ENCODE measurements at regions of chr9 and their contacts with region 1.

Region 1: GRCh38 chr9:69027355-69028096 is 8.0 kb upstream of the FXN start:
- DNase-seq: no peak
- H3K4me3 ChIP-seq: no peak overlapping the region
- H3K27ac ChIP-seq: no peak overlapping the region
- H3K27me3 ChIP-seq: peaks cover 8% of the 10 kb centered on the region
- CTCF ChIP-seq: peak; percentile 79

Region 2: GRCh38 chr9:69004836-69005235 is 22.7 kb before region 1 on chr9:
- CTCF ChIA-PET with region 1: interaction called, 12 read pairs
- POLR2A ChIA-PET with region 1: no interaction called
- DNase-seq: no peak
- H3K4me3 ChIP-seq: no peak overlapping the region
- H3K27ac ChIP-seq: no peak overlapping the region
- H3K27me3 ChIP-seq: peaks cover 2% of the 10 kb centered on the region
- CTCF ChIP-seq: no peak

Measured in AG04450 (cell line).